B cell (primary cell): ENCODE measurements at regions of chr2 and their contacts with region 1.

Region 1: GRCh38 chr2:54522624-54523281 is 66.6 kb downstream of the SPTBN1 start:
- DNase-seq: peak; percentile 84
- ATAC-seq: peak; percentile 95
- H3K4me3 ChIP-seq: no peak overlapping the region
- H3K4me3 Mint-ChIP-seq: no peak overlapping the region
- H3K27ac ChIP-seq: no peak overlapping the region
- H3K27ac Mint-ChIP-seq: peak overlapping the region; percentile 72
- H3K4me1 ChIP-seq: no peaks in the 10 kb centered on the region
- H3K4me1 Mint-ChIP-seq: peaks cover 9% of the 10 kb centered on the region
- H3K27me3 ChIP-seq: no peaks in the 10 kb centered on the region
- H3K27me3 Mint-ChIP-seq: peaks cover 10% of the 10 kb centered on the region
- CTCF ChIP-seq: peak; percentile 85

Region 2: DNA sequence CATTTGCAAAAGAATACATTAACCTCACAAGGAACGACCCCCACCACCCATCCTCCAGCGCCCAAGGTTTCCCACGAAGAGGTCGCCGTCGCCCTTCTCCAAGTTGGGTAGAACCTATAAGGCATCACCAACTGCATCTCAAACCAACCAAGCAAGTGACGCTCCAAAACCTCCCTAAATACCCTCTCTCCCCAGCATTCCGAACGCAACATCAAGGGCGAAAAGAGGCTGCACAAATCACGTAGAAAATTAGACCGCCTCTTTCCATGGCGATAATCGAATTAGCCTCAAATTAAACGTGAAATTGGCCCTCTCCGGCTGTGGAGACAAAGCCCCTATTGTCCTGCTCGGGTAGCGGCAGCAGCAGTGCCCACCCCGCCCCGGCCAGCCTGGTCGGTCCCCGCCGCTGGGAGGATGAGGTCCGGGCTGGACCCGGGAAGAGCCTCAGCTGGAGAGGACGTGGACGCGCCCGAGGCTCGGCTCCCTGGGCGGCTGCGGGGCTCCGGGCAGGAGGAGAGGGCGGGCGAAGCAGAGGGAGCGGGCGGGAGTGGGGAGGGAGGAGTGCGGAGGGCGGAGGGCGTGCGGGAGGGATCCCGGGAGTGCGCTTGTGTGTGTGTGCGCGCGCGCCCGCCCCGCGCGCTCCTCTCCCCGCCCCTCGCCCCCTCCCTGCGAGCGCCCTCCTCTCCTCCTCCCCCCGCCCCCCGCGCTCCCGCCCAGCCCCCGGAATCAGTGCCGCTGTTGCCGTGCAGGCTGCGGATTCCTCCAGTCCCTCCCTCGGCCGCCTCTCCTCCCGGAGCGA is 67.0 kb before region 1 on chr2 and contains the start of gene SPTBN1:
- CTCF ChIA-PET with region 1: no interaction called
- POLR2A ChIA-PET with region 1: no interaction called
- intact Hi-C with region 1: no loop called
- DNase-seq: peak; percentile 37
- ATAC-seq: peak; percentile 28
- H3K4me3 ChIP-seq: peak within 1 kb of the TSS; percentile 21 to 70 (median 51)
- H3K4me3 Mint-ChIP-seq: peak within 1 kb of the TSS; percentile 96
- H3K27ac ChIP-seq: no peak within 1 kb of the TSS
- H3K27ac Mint-ChIP-seq: no peak within 1 kb of the TSS
- H3K4me1 ChIP-seq: peaks cover 18 to 26% of the 10 kb centered on the region in 2 donors
- H3K4me1 Mint-ChIP-seq: peaks cover 18% of the 10 kb centered on the region
- H3K27me3 ChIP-seq: peaks cover 0 to 42% (median 34%) of the 10 kb centered on the region in 4 experiments
- H3K27me3 Mint-ChIP-seq: peaks cover 35% of the 10 kb centered on the region
- CTCF ChIP-seq: no peak
- total RNA-seq, gene SPTBN1: 144 and 145 TPM in 2 replicates

Region 3: DNA sequence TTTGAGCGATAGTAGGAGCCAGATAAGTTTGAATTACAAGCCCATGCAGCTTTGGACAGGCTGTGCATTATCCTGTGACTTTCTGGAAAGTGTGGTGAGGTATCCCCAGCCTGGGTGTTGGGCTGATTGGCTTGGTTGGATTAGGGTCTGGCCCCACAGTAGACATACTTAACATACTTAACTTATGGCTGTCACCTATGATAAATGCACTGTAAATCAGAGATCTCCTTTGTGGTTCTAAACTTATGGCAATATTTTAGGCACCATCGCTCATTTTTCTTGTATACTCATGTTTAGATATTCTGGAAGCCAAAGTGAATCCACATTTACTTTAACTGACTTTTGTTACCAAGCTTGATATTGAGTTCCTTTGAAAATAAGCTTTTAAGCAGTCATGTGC is 11.8 kb before region 1 on chr2:
- CTCF ChIA-PET with region 1: no interaction called
- POLR2A ChIA-PET with region 1: no interaction called
- intact Hi-C with region 1: no loop called
- DNase-seq: no peak
- ATAC-seq: no peak
- H3K4me3 ChIP-seq: no peak overlapping the region
- H3K4me3 Mint-ChIP-seq: no peak overlapping the region
- H3K27ac ChIP-seq: no peak overlapping the region
- H3K27ac Mint-ChIP-seq: no peak overlapping the region
- H3K4me1 ChIP-seq: no peaks in the 10 kb centered on the region
- H3K4me1 Mint-ChIP-seq: no peaks in the 10 kb centered on the region
- H3K27me3 ChIP-seq: no peaks in the 10 kb centered on the region
- H3K27me3 Mint-ChIP-seq: no peaks in the 10 kb centered on the region
- CTCF ChIP-seq: no peak

Region 4: DNA sequence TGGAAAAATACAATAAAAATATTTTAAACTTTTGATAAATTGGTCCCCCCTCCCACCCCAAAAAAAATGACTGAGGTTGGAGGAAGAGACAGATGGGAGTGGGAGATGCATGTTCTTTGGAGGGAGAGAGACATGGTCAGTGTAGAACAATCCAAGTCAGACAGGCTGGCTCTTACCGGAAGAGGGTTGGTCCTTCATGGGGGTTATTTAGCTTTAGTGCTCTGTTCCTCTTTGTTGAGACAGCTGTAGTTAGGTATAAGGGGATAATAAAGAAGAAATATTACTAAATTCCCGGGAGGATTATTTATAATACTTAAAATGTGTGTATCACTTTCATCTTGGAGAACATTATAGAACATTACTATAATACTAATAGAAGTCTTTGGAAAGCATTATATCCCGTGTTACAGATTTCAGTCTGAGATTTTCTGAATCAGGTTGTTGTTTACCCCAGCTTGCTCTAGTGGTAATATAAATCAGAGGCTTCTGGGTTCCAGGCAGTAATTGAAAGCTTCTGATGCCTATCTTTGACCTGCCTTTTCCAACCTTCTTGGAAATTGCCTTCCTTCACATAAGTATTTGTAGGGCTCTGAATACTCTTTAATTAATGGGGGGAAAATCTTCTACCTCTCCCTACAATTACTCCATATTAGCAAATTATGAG is 21.1 kb after region 1 on chr2:
- CTCF ChIA-PET with region 1: no interaction called
- POLR2A ChIA-PET with region 1: no interaction called
- intact Hi-C with region 1: no loop called
- DNase-seq: no peak
- ATAC-seq: no peak
- H3K4me3 ChIP-seq: no peak overlapping the region
- H3K4me3 Mint-ChIP-seq: no peak overlapping the region
- H3K27ac ChIP-seq: no peak overlapping the region
- H3K27ac Mint-ChIP-seq: no peak overlapping the region
- H3K4me1 ChIP-seq: peaks cover 0 to 2% of the 10 kb centered on the region in 2 donors
- H3K4me1 Mint-ChIP-seq: peaks cover 5% of the 10 kb centered on the region
- H3K27me3 ChIP-seq: no peaks in the 10 kb centered on the region
- H3K27me3 Mint-ChIP-seq: no peaks in the 10 kb centered on the region
- CTCF ChIP-seq: no peak

Region 5: DNA sequence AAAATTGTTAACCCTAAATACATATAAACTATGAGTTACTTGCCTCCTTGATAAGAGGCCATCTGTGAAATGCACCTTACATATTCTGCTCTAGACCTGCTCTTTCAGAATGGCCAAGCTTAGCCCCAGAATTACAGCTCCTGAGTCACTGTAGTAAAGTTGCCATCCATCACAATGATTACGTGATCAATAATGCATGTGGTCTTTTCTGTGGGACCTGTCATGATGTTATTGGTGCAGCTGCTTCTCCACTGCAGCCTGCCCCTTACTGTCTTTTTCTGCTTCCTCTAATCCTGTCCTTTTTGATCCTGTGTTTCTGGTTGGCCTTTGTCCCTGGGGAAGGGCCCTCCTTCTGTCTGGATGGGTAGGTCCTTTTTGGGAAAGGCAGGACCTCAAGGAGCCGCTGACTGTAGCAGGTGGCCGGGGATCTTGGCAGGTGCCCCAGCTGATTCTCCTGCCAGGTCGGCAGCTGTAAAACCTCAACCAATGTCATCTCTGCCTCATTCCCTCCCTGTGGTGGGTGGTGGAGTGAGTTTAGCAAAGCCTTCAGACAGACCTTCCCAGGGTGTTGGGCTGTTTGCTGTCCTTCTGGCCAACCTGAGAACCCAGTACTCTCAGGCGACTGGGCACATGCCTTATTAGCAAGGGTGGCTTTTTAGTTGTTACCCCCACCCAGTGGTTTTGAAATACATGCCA is 74.5 kb after region 1 on chr2:
- CTCF ChIA-PET with region 1: interaction called, 19 read pairs
- POLR2A ChIA-PET with region 1: no interaction called
- intact Hi-C with region 1: loop called (anchors 2 kb)
- DNase-seq: no peak
- ATAC-seq: peak; percentile 18
- H3K4me3 ChIP-seq: peak overlapping the region in 1 of 5 experiments; percentile 38
- H3K4me3 Mint-ChIP-seq: peak overlapping the region; percentile 67
- H3K27ac ChIP-seq: peak overlapping the region in 1 of 2 donors; percentile 71
- H3K27ac Mint-ChIP-seq: peak overlapping the region; percentile 80
- H3K4me1 ChIP-seq: peaks cover 74 to 81% of the 10 kb centered on the region in 2 donors
- H3K4me1 Mint-ChIP-seq: peaks cover 93% of the 10 kb centered on the region
- H3K27me3 ChIP-seq: no peaks in the 10 kb centered on the region
- H3K27me3 Mint-ChIP-seq: no peaks in the 10 kb centered on the region
- CTCF ChIP-seq: no peak

Region 6: GRCh38 chr2:54634564-54635511 is 112.1 kb after region 1 on chr2:
- CTCF ChIA-PET with region 1: interaction called, 23 read pairs
- POLR2A ChIA-PET with region 1: no interaction called
- intact Hi-C with region 1: loop called (anchors 1 kb)
- DNase-seq: peak; percentile 68
- ATAC-seq: peak; percentile 65
- H3K4me3 ChIP-seq: no peak overlapping the region
- H3K4me3 Mint-ChIP-seq: peak overlapping the region; percentile 67
- H3K27ac ChIP-seq: peak overlapping the region; percentile 46 to 85
- H3K27ac Mint-ChIP-seq: peak overlapping the region; percentile 94
- H3K4me1 ChIP-seq: peaks cover 35 to 42% of the 10 kb centered on the region in 2 donors
- H3K4me1 Mint-ChIP-seq: peaks cover 60% of the 10 kb centered on the region
- H3K27me3 ChIP-seq: no peaks in the 10 kb centered on the region
- H3K27me3 Mint-ChIP-seq: no peaks in the 10 kb centered on the region
- CTCF ChIP-seq: no peak

Region 7: GRCh38 chr2:54649191-54649590 is 126.4 kb after region 1 on chr2:
- CTCF ChIA-PET with region 1: interaction called, 14 read pairs
- POLR2A ChIA-PET with region 1: no interaction called
- intact Hi-C with region 1: no loop called
- DNase-seq: no peak
- ATAC-seq: no peak
- H3K4me3 ChIP-seq: no peak overlapping the region
- H3K4me3 Mint-ChIP-seq: no peak overlapping the region
- H3K27ac ChIP-seq: no peak overlapping the region
- H3K27ac Mint-ChIP-seq: no peak overlapping the region
- H3K4me1 ChIP-seq: no peaks in the 10 kb centered on the region
- H3K4me1 Mint-ChIP-seq: no peaks in the 10 kb centered on the region
- H3K27me3 ChIP-seq: no peaks in the 10 kb centered on the region
- H3K27me3 Mint-ChIP-seq: no peaks in the 10 kb centered on the region
- CTCF ChIP-seq: no peak

Region 8: DNA sequence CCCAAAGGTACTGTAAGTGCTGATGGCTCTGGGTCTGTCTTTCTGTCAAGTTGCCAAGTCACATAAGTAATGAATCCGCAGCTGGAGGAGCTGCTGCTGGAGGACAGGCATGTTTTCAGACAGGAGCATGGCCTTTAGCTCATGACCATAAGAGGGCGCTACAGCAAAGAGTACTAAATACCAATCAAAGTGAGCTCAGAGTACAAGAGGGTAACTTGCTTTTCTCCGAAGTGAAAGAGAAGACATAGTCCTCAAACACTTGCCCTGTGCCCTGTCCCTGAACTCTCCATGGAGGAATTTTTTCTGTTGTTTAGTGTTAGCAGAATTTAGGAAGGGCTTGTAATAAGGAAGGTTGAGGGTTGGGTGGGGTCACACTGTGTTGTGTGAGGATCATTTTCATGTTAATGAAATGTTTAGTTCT is 142.7 kb after region 1 on chr2:
- CTCF ChIA-PET with region 1: interaction called, 60 read pairs
- POLR2A ChIA-PET with region 1: no interaction called
- intact Hi-C with region 1: no loop called
- DNase-seq: peak; percentile 65
- ATAC-seq: peak; percentile 60
- H3K4me3 ChIP-seq: no peak overlapping the region
- H3K4me3 Mint-ChIP-seq: no peak overlapping the region
- H3K27ac ChIP-seq: no peak overlapping the region
- H3K27ac Mint-ChIP-seq: no peak overlapping the region
- H3K4me1 ChIP-seq: no peaks in the 10 kb centered on the region
- H3K4me1 Mint-ChIP-seq: no peaks in the 10 kb centered on the region
- H3K27me3 ChIP-seq: no peaks in the 10 kb centered on the region
- H3K27me3 Mint-ChIP-seq: no peaks in the 10 kb centered on the region
- CTCF ChIP-seq: peak; percentile 76

Region 9: DNA sequence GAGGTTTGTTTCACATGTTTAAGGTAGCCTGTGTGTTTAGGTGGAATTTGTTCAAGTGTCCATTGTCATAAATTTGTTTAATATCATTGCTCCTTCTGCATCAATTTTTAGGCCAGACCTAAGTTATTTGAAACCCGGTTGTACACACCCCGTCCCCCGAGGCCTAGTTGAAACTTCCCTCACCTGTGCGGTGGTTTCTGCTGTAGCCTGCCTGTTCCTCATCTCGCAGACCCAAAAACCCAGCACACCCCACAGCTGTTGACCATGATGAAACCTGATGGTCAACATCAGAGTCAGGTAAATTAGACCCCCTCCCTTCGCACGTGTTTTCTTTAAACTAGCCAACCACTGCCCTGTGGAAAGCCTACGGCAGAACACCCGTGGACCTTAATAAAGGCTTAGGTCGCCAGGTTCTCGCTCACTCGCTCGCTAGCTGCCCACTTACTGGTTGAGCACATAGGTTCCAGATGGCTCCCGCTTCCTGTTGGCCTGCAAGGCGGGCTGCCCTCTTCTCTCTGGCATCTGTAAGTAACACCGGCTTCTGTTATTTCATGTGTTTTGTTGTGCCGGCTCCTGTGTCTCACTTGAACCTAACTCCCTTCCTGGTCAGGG is 265.1 kb after region 1 on chr2:
- CTCF ChIA-PET with region 1: no interaction called
- POLR2A ChIA-PET with region 1: no interaction called
- intact Hi-C with region 1: no loop called
- DNase-seq: peak; percentile 57
- ATAC-seq: peak; percentile 81
- H3K4me3 ChIP-seq: peak overlapping the region in 3 of 5 experiments; percentile 5 to 38 (median 7)
- H3K4me3 Mint-ChIP-seq: peak overlapping the region; percentile 68
- H3K27ac ChIP-seq: peak overlapping the region; percentile 53 to 57
- H3K27ac Mint-ChIP-seq: peak overlapping the region; percentile 90
- H3K4me1 ChIP-seq: peaks cover 17 to 31% of the 10 kb centered on the region in 2 donors
- H3K4me1 Mint-ChIP-seq: peaks cover 51% of the 10 kb centered on the region
- H3K27me3 ChIP-seq: no peaks in the 10 kb centered on the region
- H3K27me3 Mint-ChIP-seq: no peaks in the 10 kb centered on the region
- CTCF ChIP-seq: no peak

Region 10: DNA sequence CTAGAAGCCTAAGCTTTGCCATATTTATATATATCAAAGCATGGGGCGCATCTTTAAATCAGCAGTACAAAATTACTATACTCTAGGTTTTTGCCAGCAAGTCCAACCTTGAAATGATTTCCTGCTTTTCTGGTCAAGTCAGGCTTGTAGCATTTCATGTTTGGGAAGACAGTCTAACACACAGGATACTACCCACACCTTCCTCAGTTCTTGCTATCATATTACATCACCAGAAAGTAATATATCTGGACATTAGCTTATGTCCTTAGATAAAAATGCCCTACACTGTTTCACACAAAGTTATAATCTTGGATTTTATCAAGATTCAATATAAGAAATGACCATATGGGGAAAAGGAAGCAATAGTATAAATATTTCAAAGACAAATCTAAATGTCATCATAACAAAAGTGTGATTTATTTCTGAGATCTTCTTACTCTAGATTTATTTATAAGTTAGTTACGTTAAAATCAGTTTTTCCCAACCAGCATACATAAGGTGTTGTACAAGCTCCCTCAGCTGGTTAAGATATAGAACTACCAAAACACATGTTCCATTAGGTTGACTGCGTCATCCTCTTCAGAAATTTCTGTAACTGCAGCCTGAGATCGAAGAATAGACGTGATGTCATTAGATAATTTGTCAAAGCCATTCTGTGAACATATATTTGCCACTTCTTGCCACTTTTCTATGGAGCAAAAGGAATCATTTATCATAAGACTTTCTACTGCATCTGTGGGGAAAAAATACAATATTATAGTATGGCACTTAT is 652.7 kb after region 1 on chr2:
- CTCF ChIA-PET with region 1: no interaction called
- POLR2A ChIA-PET with region 1: no interaction called
- intact Hi-C with region 1: loop called (anchors 10 kb)
- DNase-seq: peak; percentile 68
- ATAC-seq: peak; percentile 88
- H3K4me3 ChIP-seq: peak overlapping the region in 1 of 5 experiments; percentile 34
- H3K4me3 Mint-ChIP-seq: peak overlapping the region; percentile 11
- H3K27ac ChIP-seq: no peak overlapping the region
- H3K27ac Mint-ChIP-seq: no peak overlapping the region
- H3K4me1 ChIP-seq: peaks cover 0 to 4% of the 10 kb centered on the region in 2 donors
- H3K4me1 Mint-ChIP-seq: peaks cover 7% of the 10 kb centered on the region
- H3K27me3 ChIP-seq: no peaks in the 10 kb centered on the region
- H3K27me3 Mint-ChIP-seq: no peaks in the 10 kb centered on the region
- CTCF ChIP-seq: peak; percentile 74